CD8-positive, alpha-beta memory T cell (primary cell): ENCODE measurements at regions of chr6 and their contacts with region 1.

Region 1: GRCh38 chr6:15362274-15363160 is 116.6 kb downstream of the JARID2 start:
- DNase-seq: no peak
- H3K4me3 ChIP-seq: no peak overlapping the region
- H3K4me3 Mint-ChIP-seq: no peak overlapping the region
- H3K27ac ChIP-seq: no peak overlapping the region
- H3K27ac Mint-ChIP-seq: no peak overlapping the region
- H3K4me1 ChIP-seq: peaks cover 59% of the 10 kb centered on the region
- H3K4me1 Mint-ChIP-seq: peaks cover 19 to 52% (median 38%) of the 10 kb centered on the region in 3 donors
- H3K27me3 ChIP-seq: no peaks in the 10 kb centered on the region
- H3K27me3 Mint-ChIP-seq: no peaks in the 10 kb centered on the region

Region 2: GRCh38 chr6:14212632-14213031 is 1149.9 kb before region 1 on chr6:
- CTCF ChIA-PET with region 1: no interaction called
- POLR2A ChIA-PET with region 1: interaction called, 13 read pairs
- DNase-seq: no peak
- H3K4me3 ChIP-seq: no peak overlapping the region
- H3K4me3 Mint-ChIP-seq: peak overlapping the region in 1 of 7 donors; percentile 95
- H3K27ac ChIP-seq: no peak overlapping the region
- H3K27ac Mint-ChIP-seq: no peak overlapping the region
- H3K4me1 ChIP-seq: peaks cover 11% of the 10 kb centered on the region
- H3K4me1 Mint-ChIP-seq: peaks cover 12 to 22% (median 17%) of the 10 kb centered on the region in 3 donors
- H3K27me3 ChIP-seq: no peaks in the 10 kb centered on the region
- H3K27me3 Mint-ChIP-seq: peaks cover 0 to 8% of the 10 kb centered on the region in 2 donors

Region 3: GRCh38 chr6:15386144-15387112 is 23.9 kb after region 1 on chr6:
- CTCF ChIA-PET with region 1: no interaction called
- POLR2A ChIA-PET with region 1: no interaction called
- DNase-seq: no peak
- H3K4me3 ChIP-seq: no peak overlapping the region
- H3K4me3 Mint-ChIP-seq: peak overlapping the region in 1 of 7 donors; percentile 6
- H3K27ac ChIP-seq: no peak overlapping the region
- H3K27ac Mint-ChIP-seq: peak overlapping the region in 3 of 8 donors; percentile 0 to 66 (median 51)
- H3K4me1 ChIP-seq: peaks cover 42% of the 10 kb centered on the region
- H3K4me1 Mint-ChIP-seq: peaks cover 58 to 91% (median 86%) of the 10 kb centered on the region in 3 donors
- H3K27me3 ChIP-seq: no peaks in the 10 kb centered on the region
- H3K27me3 Mint-ChIP-seq: no peaks in the 10 kb centered on the region

Region 4: GRCh38 chr6:15413466-15414234 is 51.1 kb after region 1 on chr6:
- CTCF ChIA-PET with region 1: no interaction called
- POLR2A ChIA-PET with region 1: no interaction called
- DNase-seq: no peak
- H3K4me3 ChIP-seq: no peak overlapping the region
- H3K4me3 Mint-ChIP-seq: no peak overlapping the region
- H3K27ac ChIP-seq: no peak overlapping the region
- H3K27ac Mint-ChIP-seq: peak overlapping the region in 4 of 8 donors; percentile 36 to 58 (median 50)
- H3K4me1 ChIP-seq: peaks cover 39% of the 10 kb centered on the region
- H3K4me1 Mint-ChIP-seq: peaks cover 48 to 66% (median 62%) of the 10 kb centered on the region in 3 donors
- H3K27me3 ChIP-seq: no peaks in the 10 kb centered on the region
- H3K27me3 Mint-ChIP-seq: no peaks in the 10 kb centered on the region

Region 5: DNA sequence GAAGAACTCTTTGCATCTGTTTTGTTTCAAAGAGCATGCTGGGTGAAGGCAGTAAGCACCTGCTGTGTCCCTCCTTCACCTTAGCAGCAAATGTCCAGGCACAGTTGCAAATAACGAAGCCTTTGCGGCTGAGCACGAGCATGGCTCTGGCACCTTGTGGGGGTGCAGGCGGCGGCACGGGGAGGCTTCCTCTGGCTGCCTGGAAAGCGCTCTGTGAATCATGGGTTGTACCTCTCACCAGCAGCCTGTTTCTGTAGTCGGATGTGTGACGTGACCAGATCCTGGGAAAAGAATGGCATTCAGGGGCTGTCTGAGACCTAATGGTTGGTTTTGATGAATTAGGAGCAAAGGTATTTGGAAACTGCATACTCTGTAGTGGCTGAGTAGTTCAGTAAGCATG is 155.5 kb after region 1 on chr6:
- CTCF ChIA-PET with region 1: no interaction called
- POLR2A ChIA-PET with region 1: interaction called, 10 read pairs
- DNase-seq: no peak
- H3K4me3 ChIP-seq: no peak overlapping the region
- H3K4me3 Mint-ChIP-seq: no peak overlapping the region
- H3K27ac ChIP-seq: no peak overlapping the region
- H3K27ac Mint-ChIP-seq: peak overlapping the region in 1 of 8 donors; percentile 67
- H3K4me1 ChIP-seq: no peaks in the 10 kb centered on the region
- H3K4me1 Mint-ChIP-seq: peaks cover 7 to 14% (median 13%) of the 10 kb centered on the region in 3 donors
- H3K27me3 ChIP-seq: no peaks in the 10 kb centered on the region
- H3K27me3 Mint-ChIP-seq: peaks cover 0 to 6% of the 10 kb centered on the region in 2 donors